GM12878 (cell line): ENCODE measurements at regions of chr5 and their contacts with region 1.

Region 1: DNA sequence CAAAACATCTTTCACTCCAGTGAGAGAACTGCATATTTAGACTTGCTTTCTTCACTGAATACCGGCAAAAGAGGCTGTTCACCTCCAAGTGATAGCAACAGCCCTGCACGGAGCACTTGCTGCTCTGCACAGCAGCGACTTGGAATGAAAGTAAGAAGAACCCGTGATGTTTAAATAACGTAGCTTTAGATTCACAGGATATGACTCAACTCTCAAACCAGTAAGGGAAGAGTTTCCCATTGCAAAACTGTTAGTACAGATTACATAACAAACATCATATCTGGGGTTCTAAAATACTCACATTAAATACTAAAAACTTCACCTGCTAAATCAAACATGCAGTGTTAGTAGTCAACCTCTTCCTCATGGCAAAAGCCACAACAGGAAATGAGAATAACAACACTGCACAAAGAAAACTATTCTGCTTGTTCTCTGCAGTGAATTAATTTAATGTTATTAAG is 203.4 kb downstream of the MCTP1 start:
- DNase-seq: peak; percentile 89
- ATAC-seq: peak; percentile 85
- H3K4me3 ChIP-seq: peak overlapping the region; percentile 37
- H3K27ac ChIP-seq: peak overlapping the region; percentile 66
- H3K4me1 ChIP-seq: no peaks in the 10 kb centered on the region
- H3K27me3 ChIP-seq: no peaks in the 10 kb centered on the region
- CTCF ChIP-seq: no peak
- EP300 ChIP-seq: peak; percentile 26 to 55; a peak in 2 of 4 replicates
- POLR2A ChIP-seq: peak; percentile 85
- RAD21 ChIP-seq: no peak

Region 2: DNA sequence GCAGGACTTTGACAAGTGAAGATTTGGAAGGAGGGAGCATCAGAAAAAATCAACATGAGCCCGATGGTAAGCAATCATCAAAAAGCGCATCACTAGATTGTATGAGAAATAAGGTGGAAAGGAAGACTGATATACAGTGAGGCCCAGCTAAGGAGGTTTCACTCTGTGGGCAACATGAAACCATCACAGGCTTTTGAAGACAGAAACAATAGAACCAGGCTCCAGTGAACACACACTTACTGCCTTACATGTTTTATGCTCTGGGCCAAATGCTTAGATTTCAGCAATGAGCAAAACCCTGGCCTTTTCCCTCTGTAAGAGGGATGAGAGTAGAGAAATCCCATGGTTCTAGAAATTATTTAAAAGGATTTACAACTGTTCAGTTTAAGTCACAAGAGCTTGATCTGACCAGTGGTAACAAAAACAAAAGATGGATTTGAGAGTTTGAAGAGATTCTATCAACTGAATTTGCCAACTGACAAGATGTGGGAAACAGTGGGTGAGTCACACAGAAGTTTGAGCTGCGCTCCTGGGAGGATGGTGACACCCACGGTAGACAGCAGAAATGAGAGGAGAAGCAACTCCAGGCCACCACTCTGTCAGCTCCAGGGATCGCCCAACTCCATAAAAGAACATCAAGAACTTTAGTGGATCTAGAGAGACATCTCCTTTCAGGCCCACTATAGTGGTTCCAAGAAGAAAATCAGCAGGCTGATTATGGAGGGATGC is 58.4 kb before region 1 on chr5:
- CTCF ChIA-PET with region 1: interaction called, 5 read pairs
- POLR2A ChIA-PET with region 1: interaction called, 5 read pairs
- RAD21 ChIA-PET with region 1: interaction called, 11 read pairs
- SMC1A ChIA-PET with region 1: interaction called, 12 read pairs
- in situ Hi-C with region 1: no loop called
- intact Hi-C with region 1: loop called (anchors 2 kb)
- DNase-seq: peak; percentile 66
- ATAC-seq: peak; percentile 89
- H3K4me3 ChIP-seq: peak overlapping the region; percentile 32; the same call in 1 of the 2 replicates
- H3K27ac ChIP-seq: peak overlapping the region; percentile 40
- H3K4me1 ChIP-seq: peaks cover 30% of the 10 kb centered on the region
- H3K27me3 ChIP-seq: no peaks in the 10 kb centered on the region
- CTCF ChIP-seq: no peak
- EP300 ChIP-seq: no peak
- POLR2A ChIP-seq: no peak
- RAD21 ChIP-seq: no peak

Region 3: GRCh38 chr5:95063492-95063891 is 18.0 kb before region 1 on chr5:
- CTCF ChIA-PET with region 1: interaction called, 7 read pairs
- POLR2A ChIA-PET with region 1: interaction called, 24 read pairs
- RAD21 ChIA-PET with region 1: interaction called, 86 read pairs
- SMC1A ChIA-PET with region 1: interaction called, 28 read pairs
- in situ Hi-C with region 1: no loop called
- intact Hi-C with region 1: no loop called
- DNase-seq: no peak
- ATAC-seq: no peak
- H3K4me3 ChIP-seq: no peak overlapping the region
- H3K27ac ChIP-seq: no peak overlapping the region
- H3K4me1 ChIP-seq: peaks cover 1% of the 10 kb centered on the region
- H3K27me3 ChIP-seq: no peaks in the 10 kb centered on the region
- CTCF ChIP-seq: no peak
- EP300 ChIP-seq: no peak
- POLR2A ChIP-seq: no peak
- RAD21 ChIP-seq: no peak

Region 4: GRCh38 chr5:95238560-95239325 is 157.2 kb after region 1 on chr5:
- CTCF ChIA-PET with region 1: interaction called, 3 read pairs
- POLR2A ChIA-PET with region 1: no interaction called
- RAD21 ChIA-PET with region 1: interaction called, 4 read pairs
- SMC1A ChIA-PET with region 1: interaction called, 3 read pairs
- in situ Hi-C with region 1: no loop called
- intact Hi-C with region 1: loop called (anchors 5 kb)
- DNase-seq: no peak
- ATAC-seq: peak; percentile 64
- H3K4me3 ChIP-seq: no peak overlapping the region
- H3K27ac ChIP-seq: no peak overlapping the region
- H3K4me1 ChIP-seq: no peaks in the 10 kb centered on the region
- H3K27me3 ChIP-seq: no peaks in the 10 kb centered on the region
- CTCF ChIP-seq: peak; percentile 24 to 54 (median 26); a peak in 5 of 6 replicates
- EP300 ChIP-seq: no peak
- POLR2A ChIP-seq: no peak
- RAD21 ChIP-seq: peak; percentile 58

Region 5: GRCh38 chr5:95261437-95262175 is 180.1 kb after region 1 on chr5:
- CTCF ChIA-PET with region 1: no interaction called
- POLR2A ChIA-PET with region 1: no interaction called
- RAD21 ChIA-PET with region 1: no interaction called
- SMC1A ChIA-PET with region 1: no interaction called
- in situ Hi-C with region 1: no loop called
- intact Hi-C with region 1: loop called (anchors 1 kb)
- DNase-seq: no peak
- ATAC-seq: peak; percentile 78
- H3K4me3 ChIP-seq: no peak overlapping the region
- H3K27ac ChIP-seq: no peak overlapping the region
- H3K4me1 ChIP-seq: no peaks in the 10 kb centered on the region; the same call in 1 of the 2 replicates
- H3K27me3 ChIP-seq: peaks cover 0 to 2% of the 10 kb centered on the region in 2 experiments; a peak in 2 of 4 replicates
- CTCF ChIP-seq: peak; percentile 52 to 64 (median 53)
- EP300 ChIP-seq: no peak
- POLR2A ChIP-seq: no peak
- RAD21 ChIP-seq: peak; percentile 70